Naive thymus-derived CD4-positive, alpha-beta T cell (primary cell): ENCODE measurements at regions of chr17 and their contacts with region 1.

Region 1: DNA sequence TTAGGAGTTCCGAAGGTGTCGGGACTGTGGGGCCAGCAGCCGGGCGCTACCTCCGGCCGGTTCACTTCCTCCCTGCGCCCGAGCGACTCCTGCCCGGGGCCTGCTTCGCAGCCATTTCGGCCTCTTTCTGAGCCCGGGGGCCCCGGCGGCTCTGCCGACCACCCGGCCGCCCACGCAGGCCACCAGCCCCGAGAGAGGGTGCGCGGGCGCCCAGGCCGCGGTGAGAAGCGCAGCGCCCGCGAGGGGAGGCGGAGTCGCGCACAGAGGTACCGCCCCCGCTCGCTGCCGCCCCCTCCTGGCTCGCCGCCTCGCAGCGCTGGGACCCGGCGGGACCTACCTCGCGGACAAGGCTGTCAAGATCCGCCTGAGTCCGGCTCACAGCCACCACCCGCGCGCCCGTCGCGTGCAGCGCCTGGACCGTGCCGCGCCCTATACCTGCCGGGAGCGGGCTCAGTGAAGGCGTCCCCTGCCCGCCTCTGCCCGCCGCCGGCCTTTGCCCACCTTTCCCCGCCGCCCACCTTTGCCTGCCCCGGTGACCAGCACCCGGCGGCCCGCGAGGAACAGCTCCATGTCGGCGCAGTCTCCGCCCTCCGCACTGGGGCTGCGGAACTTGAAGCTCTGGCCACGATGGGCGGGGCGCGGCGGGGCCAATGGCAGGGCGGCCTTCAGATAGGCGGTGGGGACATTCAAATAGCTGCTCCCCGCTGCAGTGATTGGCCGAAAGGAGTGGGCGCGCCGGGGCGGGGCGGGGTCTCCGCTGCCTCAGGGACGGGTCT is at the start of gene DCXR:
- DNase-seq: peak; percentile 87 to 97 (median 93)
- ATAC-seq: peak; percentile 96
- H3K4me3 ChIP-seq: peak within 1 kb of the TSS; percentile 71
- H3K4me3 Mint-ChIP-seq: peak within 1 kb of the TSS; percentile 82 to 94 (median 89)
- H3K27ac ChIP-seq: peak within 1 kb of the TSS; percentile 75
- H3K27ac Mint-ChIP-seq: peak within 1 kb of the TSS; percentile 61 to 94 (median 90)
- H3K4me1 ChIP-seq: peaks cover 7% of the 10 kb centered on the region in 2 donors
- H3K4me1 Mint-ChIP-seq: peaks cover 14 to 29% (median 24%) of the 10 kb centered on the region in 7 donors
- H3K27me3 ChIP-seq: no peaks in the 10 kb centered on the region
- H3K27me3 Mint-ChIP-seq: no peaks in the 10 kb centered on the region
- total RNA-seq, gene DCXR: 63.0 to 130 (median 83.6) TPM

Region 2: GRCh38 chr17:81553018-81553615 is 484.2 kb before region 1 on chr17:
- CTCF ChIA-PET with region 1: no interaction called
- POLR2A ChIA-PET with region 1: no interaction called
- intact Hi-C with region 1: no loop called
- DNase-seq: peak; percentile 34 to 83 (median 75)
- ATAC-seq: peak; percentile 77
- H3K4me3 ChIP-seq: peak overlapping the region; percentile 77
- H3K4me3 Mint-ChIP-seq: peak overlapping the region; percentile 88 to 93 (median 90)
- H3K27ac ChIP-seq: peak overlapping the region; percentile 95
- H3K27ac Mint-ChIP-seq: peak overlapping the region; percentile 69 to 95 (median 92)
- H3K4me1 ChIP-seq: peaks cover 17% of the 10 kb centered on the region in 2 donors
- H3K4me1 Mint-ChIP-seq: peaks cover 16 to 41% (median 36%) of the 10 kb centered on the region in 7 donors
- H3K27me3 ChIP-seq: no peaks in the 10 kb centered on the region
- H3K27me3 Mint-ChIP-seq: no peaks in the 10 kb centered on the region

Region 3: GRCh38 chr17:81977211-81978027 is 59.9 kb before region 1 on chr17 and contains the start of gene ASPSCR1:
- CTCF ChIA-PET with region 1: no interaction called
- POLR2A ChIA-PET with region 1: no interaction called
- intact Hi-C with region 1: loop called in 1 of 2 experiments (anchors 1 kb)
- DNase-seq: peak; percentile 86 to 96 (median 93)
- ATAC-seq: peak; percentile 98
- H3K4me3 ChIP-seq: peak within 1 kb of the TSS; percentile 79
- H3K4me3 Mint-ChIP-seq: peak within 1 kb of the TSS; percentile 93 to 99 (median 96)
- H3K27ac ChIP-seq: peak within 1 kb of the TSS; percentile 90
- H3K27ac Mint-ChIP-seq: peak within 1 kb of the TSS; percentile 94 to 99 (median 97)
- H3K4me1 ChIP-seq: peaks cover 16 to 19% of the 10 kb centered on the region in 2 donors
- H3K4me1 Mint-ChIP-seq: peaks cover 26 to 51% (median 38%) of the 10 kb centered on the region in 7 donors
- H3K27me3 ChIP-seq: no peaks in the 10 kb centered on the region
- H3K27me3 Mint-ChIP-seq: peaks cover 0 to 7% (median 0%) of the 10 kb centered on the region in 5 donors
- total RNA-seq, gene ASPSCR1: 36.4 to 46.7 (median 46.0) TPM

Region 4: DNA sequence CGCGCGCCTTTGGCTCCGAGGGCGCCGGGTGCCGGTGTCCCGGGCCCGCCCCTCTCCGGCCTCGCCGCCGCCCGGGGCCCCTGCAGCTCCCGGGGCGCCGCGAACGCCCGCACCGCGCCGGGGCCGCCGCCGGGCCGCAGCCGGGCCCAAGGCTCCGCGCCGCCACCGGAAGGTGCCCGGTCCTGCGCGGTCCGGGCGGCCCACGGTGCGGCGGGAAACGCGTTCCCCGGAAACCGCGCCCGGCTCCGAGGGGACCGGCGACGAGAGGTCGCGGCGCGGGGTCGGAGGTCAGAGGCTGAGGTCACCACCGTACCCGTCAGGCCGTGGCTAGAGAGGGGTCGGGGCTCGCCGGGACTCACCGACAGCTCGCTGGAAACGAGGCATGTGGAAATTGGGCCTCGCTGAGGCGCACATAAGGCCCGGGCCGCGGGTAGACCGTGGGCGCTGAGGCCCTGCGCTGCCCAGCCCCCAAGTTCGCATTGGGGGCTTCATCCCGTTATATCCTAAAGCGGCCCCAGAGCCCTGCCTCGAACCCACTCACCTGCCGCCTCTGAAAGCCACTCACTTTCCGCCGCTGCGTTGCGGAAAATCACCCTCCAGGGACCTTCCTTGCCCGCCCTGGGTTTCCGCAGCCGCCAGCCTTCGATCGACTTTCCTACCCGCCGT is 28.5 kb after region 1 on chr17 and contains the start of gene DUS1L:
- CTCF ChIA-PET with region 1: interaction called, 3 read pairs
- POLR2A ChIA-PET with region 1: interaction called, 3 read pairs
- intact Hi-C with region 1: loop called in 1 of 2 experiments (anchors 1 kb)
- DNase-seq: peak; percentile 55 to 87 (median 71)
- ATAC-seq: peak; percentile 95
- H3K4me3 ChIP-seq: peak within 1 kb of the TSS; percentile 66
- H3K4me3 Mint-ChIP-seq: peak within 1 kb of the TSS; percentile 73 to 91 (median 82)
- H3K27ac ChIP-seq: peak within 1 kb of the TSS; percentile 86
- H3K27ac Mint-ChIP-seq: peak within 1 kb of the TSS; percentile 86 to 95 (median 93)
- H3K4me1 ChIP-seq: peaks cover 8 to 27% of the 10 kb centered on the region in 2 donors
- H3K4me1 Mint-ChIP-seq: peaks cover 0 to 18% (median 10%) of the 10 kb centered on the region in 7 donors
- H3K27me3 ChIP-seq: no peaks in the 10 kb centered on the region
- H3K27me3 Mint-ChIP-seq: no peaks in the 10 kb centered on the region
- total RNA-seq, gene DUS1L: 127 to 157 (median 147) TPM

Region 5: DNA sequence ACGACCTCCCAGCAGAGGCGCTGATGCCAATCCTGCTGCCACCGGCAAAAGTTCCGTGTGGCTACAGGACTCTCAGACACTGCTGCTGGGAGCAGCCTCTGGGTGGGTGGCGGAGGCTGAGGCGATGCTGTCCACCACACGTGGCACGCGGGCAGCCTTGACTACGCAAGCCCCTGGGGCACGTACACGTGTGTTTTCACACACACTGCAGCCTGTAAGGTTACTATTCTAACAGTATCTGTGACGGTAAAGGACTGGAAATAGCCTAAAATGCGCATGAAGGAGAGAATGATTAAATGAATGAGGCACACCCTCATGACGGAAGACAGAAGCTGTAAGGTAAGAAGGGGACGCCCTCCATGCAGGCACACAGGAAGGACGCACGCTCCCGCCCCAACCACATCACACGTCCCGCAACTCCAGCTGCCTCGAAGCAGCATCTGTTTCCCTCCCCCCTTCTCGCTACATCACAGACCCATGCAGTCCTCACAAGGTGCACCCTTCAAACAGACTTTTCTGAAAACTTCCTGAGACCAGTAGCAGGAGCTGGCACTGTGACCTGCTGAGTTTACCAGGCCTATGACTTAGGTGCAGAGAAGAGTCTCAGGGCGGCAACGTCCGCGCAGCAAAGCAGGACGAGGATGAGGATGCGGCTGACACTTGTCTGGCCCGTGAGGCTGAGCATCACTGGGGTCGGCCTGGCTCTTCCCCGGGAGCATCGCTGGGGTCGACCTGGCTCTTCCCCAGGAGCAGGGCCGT is 89.4 kb after region 1 on chr17:
- CTCF ChIA-PET with region 1: interaction called, 5 read pairs
- POLR2A ChIA-PET with region 1: interaction called, 12 read pairs
- intact Hi-C with region 1: loop called in 1 of 2 experiments (anchors 1 kb)
- DNase-seq: peak; percentile 51 to 99 (median 98)
- ATAC-seq: peak; percentile 92
- H3K4me3 ChIP-seq: peak overlapping the region; percentile 36
- H3K4me3 Mint-ChIP-seq: peak overlapping the region; percentile 71 to 87 (median 84)
- H3K27ac ChIP-seq: peak overlapping the region; percentile 97
- H3K27ac Mint-ChIP-seq: peak overlapping the region; percentile 93 to 100 (median 98)
- H3K4me1 ChIP-seq: peaks cover 36 to 78% of the 10 kb centered on the region in 2 donors
- H3K4me1 Mint-ChIP-seq: peaks cover 33 to 83% (median 65%) of the 10 kb centered on the region in 7 donors
- H3K27me3 ChIP-seq: no peaks in the 10 kb centered on the region
- H3K27me3 Mint-ChIP-seq: no peaks in the 10 kb centered on the region

Region 6: DNA sequence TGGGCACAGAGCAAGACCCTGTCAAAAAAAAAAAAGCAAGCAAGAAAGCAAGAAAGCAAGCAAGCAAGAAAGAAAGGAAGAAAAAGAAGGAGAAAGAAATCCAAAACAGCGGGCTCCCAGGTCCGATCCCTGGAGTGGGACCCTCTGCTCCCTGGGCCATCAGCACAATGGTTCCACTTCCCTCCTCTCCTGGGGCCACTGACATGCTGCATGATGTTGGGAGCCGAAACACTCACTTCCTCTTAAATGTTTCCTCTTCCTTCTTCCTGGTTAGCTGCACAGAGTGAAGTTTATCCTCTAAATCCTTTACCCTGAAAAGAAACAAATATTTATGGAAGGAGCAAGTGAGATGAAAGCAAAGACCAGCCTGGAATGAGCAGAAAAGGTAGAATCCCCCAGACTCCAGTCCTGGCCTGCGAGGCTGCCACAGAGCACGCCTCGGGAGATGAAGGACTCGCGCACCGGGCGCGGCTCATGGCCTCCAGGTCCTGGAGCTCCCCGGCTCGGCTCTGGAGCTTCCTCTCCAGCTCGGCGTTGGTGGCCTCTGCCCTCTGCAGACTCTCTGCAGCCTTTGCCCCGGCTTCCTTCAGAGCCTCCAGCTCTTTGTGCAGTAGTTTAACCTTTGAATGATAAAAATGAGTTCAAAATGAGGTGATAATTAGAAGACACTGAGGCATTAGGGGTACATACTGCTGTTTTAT is 156.4 kb after region 1 on chr17:
- CTCF ChIA-PET with region 1: no interaction called
- POLR2A ChIA-PET with region 1: no interaction called
- intact Hi-C with region 1: no loop called
- DNase-seq: peak in 1 of 9 donors; percentile 4
- ATAC-seq: peak; percentile 75
- H3K4me3 ChIP-seq: no peak overlapping the region
- H3K4me3 Mint-ChIP-seq: no peak overlapping the region
- H3K27ac ChIP-seq: no peak overlapping the region
- H3K27ac Mint-ChIP-seq: no peak overlapping the region
- H3K4me1 ChIP-seq: peaks cover 0 to 10% of the 10 kb centered on the region in 2 donors
- H3K4me1 Mint-ChIP-seq: peaks cover 9 to 20% (median 11%) of the 10 kb centered on the region in 7 donors
- H3K27me3 ChIP-seq: no peaks in the 10 kb centered on the region
- H3K27me3 Mint-ChIP-seq: no peaks in the 10 kb centered on the region

Region 7: GRCh38 chr17:82230627-82231311 is 193.5 kb after region 1 on chr17:
- CTCF ChIA-PET with region 1: no interaction called
- POLR2A ChIA-PET with region 1: no interaction called
- intact Hi-C with region 1: loop called in 1 of 2 experiments (anchors 10 kb)
- DNase-seq: peak in 2 of 9 donors; percentile 47 to 82
- ATAC-seq: peak; percentile 58
- H3K4me3 ChIP-seq: peak overlapping the region; percentile 35
- H3K4me3 Mint-ChIP-seq: peak overlapping the region in 7 of 10 donors; percentile 74 to 96 (median 79)
- H3K27ac ChIP-seq: peak overlapping the region; percentile 57
- H3K27ac Mint-ChIP-seq: no peak overlapping the region
- H3K4me1 ChIP-seq: peaks cover 26 to 32% of the 10 kb centered on the region in 2 donors
- H3K4me1 Mint-ChIP-seq: peaks cover 6 to 23% (median 10%) of the 10 kb centered on the region in 7 donors
- H3K27me3 ChIP-seq: no peaks in the 10 kb centered on the region
- H3K27me3 Mint-ChIP-seq: no peaks in the 10 kb centered on the region